RWPE1 (cell line): ENCODE measurements at regions of chr10 and their contacts with region 1.

Region 1: GRCh38 chr10:75827587-75828021 is 396.2 kb downstream of the LRMDA start:
- DNase-seq: no peak
- H3K27ac ChIP-seq: no peak overlapping the region
- CTCF ChIP-seq: no peak

Region 2: DNA sequence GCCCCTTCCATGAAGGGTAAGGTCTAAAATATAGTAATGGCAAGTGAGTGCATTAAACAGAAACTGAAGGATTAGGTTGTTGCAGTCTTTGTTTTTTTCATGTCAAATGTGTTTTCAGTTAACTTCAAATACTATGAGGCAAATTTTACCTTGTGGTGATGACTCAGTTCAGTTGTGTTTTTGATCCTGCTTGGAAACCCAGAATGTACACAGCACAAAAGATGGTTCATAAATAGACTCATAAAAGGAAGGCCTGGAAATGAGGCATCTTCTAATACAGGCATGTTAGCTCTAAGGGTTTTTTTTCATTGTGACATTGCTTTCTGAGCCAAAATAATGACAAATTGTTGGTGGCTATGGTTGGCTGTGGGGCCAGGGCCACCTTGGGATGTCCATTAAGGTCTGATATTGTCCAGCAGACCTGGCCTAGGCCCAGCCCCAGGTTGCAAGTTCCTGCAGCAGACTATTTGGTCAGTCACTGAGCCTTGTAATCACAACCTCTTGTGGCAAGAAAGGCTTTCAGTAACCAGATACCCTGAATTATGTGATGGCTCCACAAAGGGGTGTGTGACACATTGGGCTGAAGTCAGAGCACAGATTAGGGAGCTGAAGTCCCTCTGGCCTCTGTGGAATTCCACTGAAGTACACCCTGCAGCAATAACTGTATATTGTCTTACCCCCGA is 785.2 kb before region 1 on chr10:
- CTCF ChIA-PET with region 1: interaction called, 10 read pairs
- POLR2A ChIA-PET with region 1: no interaction called
- DNase-seq: no peak
- H3K27ac ChIP-seq: no peak overlapping the region
- CTCF ChIP-seq: no peak

Region 3: GRCh38 chr10:75814014-75814413 is 13.6 kb before region 1 on chr10:
- CTCF ChIA-PET with region 1: no interaction called
- POLR2A ChIA-PET with region 1: no interaction called
- DNase-seq: no peak
- H3K27ac ChIP-seq: no peak overlapping the region
- CTCF ChIP-seq: no peak